GM12878 (cell line): ENCODE measurements at regions of chr1 and their contacts with region 1.

Region 1: GRCh38 chr1:59699227-59699847 is 115.4 kb upstream of the HOOK1 start:
- DNase-seq: no peak
- ATAC-seq: peak; percentile 47
- H3K4me3 ChIP-seq: no peak overlapping the region
- H3K27ac ChIP-seq: no peak overlapping the region
- H3K4me1 ChIP-seq: peaks cover 10% of the 10 kb centered on the region; the same call in 1 of the 2 replicates
- H3K27me3 ChIP-seq: no peaks in the 10 kb centered on the region
- CTCF ChIP-seq: peak; percentile 83 to 89 (median 89)
- EP300 ChIP-seq: no peak
- POLR2A ChIP-seq: no peak
- RAD21 ChIP-seq: peak; percentile 98

Region 2: GRCh38 chr1:58739856-58740466 is 959.4 kb before region 1 on chr1:
- CTCF ChIA-PET with region 1: interaction called, 89 read pairs
- POLR2A ChIA-PET with region 1: no interaction called
- RAD21 ChIA-PET with region 1: interaction called, 37 read pairs
- SMC1A ChIA-PET with region 1: interaction called, 60 read pairs
- in situ Hi-C with region 1: loop called (anchors 25 kb)
- intact Hi-C with region 1: loop called (anchors 1 kb)
- DNase-seq: no peak
- ATAC-seq: peak; percentile 74
- H3K4me3 ChIP-seq: no peak overlapping the region
- H3K27ac ChIP-seq: no peak overlapping the region
- H3K4me1 ChIP-seq: no peaks in the 10 kb centered on the region
- H3K27me3 ChIP-seq: peaks cover 0 to 3% of the 10 kb centered on the region in 2 experiments; a peak in 2 of 4 replicates
- CTCF ChIP-seq: peak; percentile 48 to 79 (median 72); a peak in 5 of 6 replicates
- EP300 ChIP-seq: no peak
- POLR2A ChIP-seq: no peak
- RAD21 ChIP-seq: peak; percentile 99

Region 3: GRCh38 chr1:59013276-59013927 is 685.9 kb before region 1 on chr1:
- CTCF ChIA-PET with region 1: interaction called, 6 read pairs
- POLR2A ChIA-PET with region 1: no interaction called
- RAD21 ChIA-PET with region 1: interaction called, 13 read pairs
- SMC1A ChIA-PET with region 1: interaction called, 4 read pairs
- in situ Hi-C with region 1: no loop called
- intact Hi-C with region 1: no loop called
- DNase-seq: no peak
- ATAC-seq: peak; percentile 84
- H3K4me3 ChIP-seq: peak overlapping the region; percentile 62
- H3K27ac ChIP-seq: peak overlapping the region; percentile 84
- H3K4me1 ChIP-seq: peaks cover 42% of the 10 kb centered on the region
- H3K27me3 ChIP-seq: no peaks in the 10 kb centered on the region
- CTCF ChIP-seq: no peak
- EP300 ChIP-seq: 0 out of 4 replicates have a peak, but pooled peaks of 1 of the 2 experiments have one; percentile 34
- POLR2A ChIP-seq: no peak
- RAD21 ChIP-seq: no peak

Region 4: GRCh38 chr1:59223989-59224634 is 475.2 kb before region 1 on chr1:
- CTCF ChIA-PET with region 1: interaction called, 14 read pairs
- POLR2A ChIA-PET with region 1: no interaction called
- RAD21 ChIA-PET with region 1: interaction called, 13 read pairs
- SMC1A ChIA-PET with region 1: interaction called, 11 read pairs
- in situ Hi-C with region 1: no loop called
- intact Hi-C with region 1: no loop called
- DNase-seq: no peak
- ATAC-seq: no peak
- H3K4me3 ChIP-seq: no peak overlapping the region
- H3K27ac ChIP-seq: no peak overlapping the region
- H3K4me1 ChIP-seq: no peaks in the 10 kb centered on the region
- H3K27me3 ChIP-seq: no peaks in the 10 kb centered on the region
- CTCF ChIP-seq: no peak
- EP300 ChIP-seq: no peak
- POLR2A ChIP-seq: no peak
- RAD21 ChIP-seq: no peak

Region 5: GRCh38 chr1:59432531-59433439 is 266.6 kb before region 1 on chr1:
- CTCF ChIA-PET with region 1: interaction called, 10 read pairs
- POLR2A ChIA-PET with region 1: no interaction called
- RAD21 ChIA-PET with region 1: interaction called, 20 read pairs
- SMC1A ChIA-PET with region 1: interaction called, 10 read pairs
- in situ Hi-C with region 1: no loop called
- intact Hi-C with region 1: loop called (anchors 5 kb)
- DNase-seq: peak; percentile 69
- ATAC-seq: peak; percentile 96
- H3K4me3 ChIP-seq: no peak overlapping the region
- H3K27ac ChIP-seq: peak overlapping the region; percentile 53; the same call in 1 of the 2 replicates
- H3K4me1 ChIP-seq: peaks cover 16% of the 10 kb centered on the region
- H3K27me3 ChIP-seq: no peaks in the 10 kb centered on the region
- CTCF ChIP-seq: no peak
- EP300 ChIP-seq: peak; percentile 83 to 89; a peak in 3 of 4 replicates
- POLR2A ChIP-seq: no peak
- RAD21 ChIP-seq: no peak

Region 6: DNA sequence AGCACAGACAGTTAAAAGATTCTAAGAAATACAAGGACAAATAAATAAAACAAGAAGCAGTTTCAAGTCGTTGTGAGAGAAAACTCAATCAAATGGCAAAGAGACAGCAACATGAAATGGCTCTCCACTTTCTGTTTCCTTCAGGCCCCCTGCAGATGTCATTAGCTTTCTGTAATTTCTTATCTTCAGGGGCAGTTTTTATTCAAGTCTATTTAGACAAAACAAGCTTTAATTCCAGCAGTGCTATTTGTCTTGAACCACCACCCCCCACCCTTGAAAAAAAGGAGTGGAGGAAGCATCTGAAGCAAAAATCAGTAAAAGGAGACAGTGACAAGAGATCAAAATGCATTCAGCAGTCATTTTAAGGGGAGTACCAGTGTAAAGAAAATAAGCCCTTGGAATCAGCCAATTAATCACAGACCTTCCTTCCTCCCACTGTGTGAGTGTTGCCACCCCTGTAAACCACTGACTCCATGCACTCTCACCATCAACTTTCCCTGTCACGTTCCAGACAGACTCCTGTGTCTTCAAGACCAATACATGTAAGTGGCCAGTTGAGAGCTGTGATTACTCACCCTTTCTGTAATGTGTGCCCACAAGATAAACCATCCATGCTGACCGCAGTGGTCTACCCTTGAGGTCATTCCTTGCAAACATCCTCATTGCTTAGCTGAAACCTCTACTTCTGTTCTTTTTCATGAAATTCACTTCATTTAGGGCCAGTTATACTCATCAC is 20.7 kb before region 1 on chr1:
- CTCF ChIA-PET with region 1: interaction called, 10 read pairs
- POLR2A ChIA-PET with region 1: no interaction called
- RAD21 ChIA-PET with region 1: interaction called, 14 read pairs
- SMC1A ChIA-PET with region 1: interaction called, 11 read pairs
- in situ Hi-C with region 1: no loop called
- intact Hi-C with region 1: no loop called
- DNase-seq: no peak
- ATAC-seq: no peak
- H3K4me3 ChIP-seq: no peak overlapping the region
- H3K27ac ChIP-seq: no peak overlapping the region
- H3K4me1 ChIP-seq: no peaks in the 10 kb centered on the region; the same call in 1 of the 2 replicates
- H3K27me3 ChIP-seq: no peaks in the 10 kb centered on the region
- CTCF ChIP-seq: no peak
- EP300 ChIP-seq: no peak
- POLR2A ChIP-seq: no peak
- RAD21 ChIP-seq: no peak

Region 7: DNA sequence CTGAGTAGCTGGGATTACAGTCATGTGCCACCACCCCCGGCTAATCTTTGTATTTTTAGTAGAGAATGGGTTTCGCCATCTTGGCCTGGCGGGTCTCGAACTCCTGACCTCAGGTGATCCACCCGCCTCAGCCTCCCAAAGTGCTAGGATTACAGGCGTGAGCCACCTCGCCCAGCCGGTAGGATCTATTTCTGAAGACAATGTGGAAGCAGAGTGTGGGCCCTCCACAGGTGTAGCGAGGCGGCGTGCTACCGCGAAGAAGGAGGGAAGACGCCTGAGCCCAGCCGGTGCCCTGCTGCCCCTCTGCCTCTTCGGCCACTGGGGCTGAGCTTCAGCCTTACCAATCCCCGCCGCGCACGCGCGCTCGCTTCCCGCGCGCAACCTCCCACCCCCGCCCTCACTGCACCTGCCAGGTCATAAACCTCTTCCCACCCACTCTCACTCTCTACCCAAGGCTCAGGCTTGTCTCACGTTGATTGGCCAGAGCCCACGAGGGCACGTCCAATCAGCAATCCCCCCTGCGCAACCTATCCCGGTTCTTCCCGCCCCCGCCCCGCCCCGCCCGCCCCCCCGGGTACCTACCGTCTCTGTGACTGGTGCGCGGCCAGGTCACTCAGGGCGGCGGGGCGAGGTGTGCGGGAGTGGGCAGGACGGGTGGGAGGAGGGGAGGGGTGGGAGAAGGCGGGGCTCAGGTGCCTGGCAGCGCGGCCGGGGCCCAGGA is 115.0 kb after region 1 on chr1:
- CTCF ChIA-PET with region 1: no interaction called
- POLR2A ChIA-PET with region 1: no interaction called
- RAD21 ChIA-PET with region 1: no interaction called
- SMC1A ChIA-PET with region 1: no interaction called
- in situ Hi-C with region 1: no loop called
- intact Hi-C with region 1: no loop called
- DNase-seq: peak; percentile 94
- ATAC-seq: peak; percentile 96
- H3K4me3 ChIP-seq: peak overlapping the region; percentile 53; the same call in 1 of the 2 replicates
- H3K27ac ChIP-seq: no peak overlapping the region
- H3K4me1 ChIP-seq: no peaks in the 10 kb centered on the region
- H3K27me3 ChIP-seq: no peaks in the 10 kb centered on the region
- CTCF ChIP-seq: no peak
- EP300 ChIP-seq: no peak
- POLR2A ChIP-seq: peak; percentile 76
- RAD21 ChIP-seq: no peak

Region 8: GRCh38 chr1:59947047-59947938 is 248.0 kb after region 1 on chr1:
- CTCF ChIA-PET with region 1: interaction called, 7 read pairs
- POLR2A ChIA-PET with region 1: no interaction called
- RAD21 ChIA-PET with region 1: interaction called, 15 read pairs
- SMC1A ChIA-PET with region 1: interaction called, 7 read pairs
- in situ Hi-C with region 1: no loop called
- intact Hi-C with region 1: no loop called
- DNase-seq: peak; percentile 4
- ATAC-seq: peak; percentile 95
- H3K4me3 ChIP-seq: no peak overlapping the region
- H3K27ac ChIP-seq: no peak overlapping the region
- H3K4me1 ChIP-seq: no peaks in the 10 kb centered on the region
- H3K27me3 ChIP-seq: no peaks in the 10 kb centered on the region
- CTCF ChIP-seq: peak; percentile 89 to 95 (median 93)
- EP300 ChIP-seq: no peak
- POLR2A ChIP-seq: no peak
- RAD21 ChIP-seq: peak; percentile 90